Activated T-helper 2 cell treated with anti-CD3 and anti-CD28 coated beads, Interferon-gamma antibody, Interleukin-2, Interleukin-4, amounts not matched to agents 10 μg/mL and 5 μg/mL and 100 μg/mL, durations not matched to agents 14 hours and 24 hours and 36 hours (primary cell): ENCODE measurements at regions of chr7 and their contacts with region 1.

Region 1: DNA sequence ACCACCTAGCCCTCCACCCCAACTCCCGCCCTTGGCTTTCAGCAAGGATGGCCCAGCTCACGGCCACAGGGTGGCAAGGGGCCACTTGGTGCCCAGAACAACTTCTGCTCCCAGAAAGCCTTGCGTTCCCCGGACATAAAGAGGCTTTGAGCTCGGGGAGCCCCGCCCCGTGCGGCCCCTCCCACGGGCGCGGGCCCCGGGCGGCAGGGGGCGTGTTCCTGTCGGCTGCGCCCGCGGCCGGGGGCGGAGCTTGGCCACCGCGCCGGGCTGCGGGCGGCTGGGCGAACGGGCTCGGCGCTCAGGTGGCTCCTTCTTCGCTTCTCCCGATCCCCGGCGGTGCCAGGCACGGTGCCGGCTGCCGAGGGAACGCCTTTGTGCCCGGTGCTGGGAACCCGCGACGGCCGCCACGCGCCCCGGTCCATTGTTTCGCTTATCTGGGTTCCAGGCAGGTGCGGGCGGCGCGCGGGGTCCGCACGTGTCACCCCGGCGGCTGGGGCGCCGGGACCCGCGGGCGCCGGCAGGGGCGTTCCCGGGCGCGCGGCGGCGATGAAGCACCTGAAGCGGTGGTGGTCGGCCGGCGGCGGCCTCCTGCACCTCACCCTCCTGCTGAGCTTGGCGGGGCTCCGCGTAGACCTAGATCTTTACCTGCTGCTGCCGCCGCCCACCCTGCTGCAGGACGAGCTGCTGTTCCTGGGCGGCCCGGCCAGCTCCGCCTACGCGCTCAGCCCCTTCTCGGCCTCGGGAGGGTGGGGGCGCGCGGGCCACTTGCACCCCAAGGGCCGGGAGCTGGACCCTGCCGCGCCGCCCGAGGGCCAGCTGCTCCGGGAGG is at the start of gene NFE2L3:
- DNase-seq: peak; percentile 82
- H3K4me3 Mint-ChIP-seq: peak within 1 kb of the TSS; percentile 99
- H3K27ac Mint-ChIP-seq: peak within 1 kb of the TSS; percentile 97
- H3K4me1 Mint-ChIP-seq: peaks cover 56% of the 10 kb centered on the region
- H3K27me3 Mint-ChIP-seq: no peaks in the 10 kb centered on the region
- total RNA-seq, gene NFE2L3: 42.3 and 44.6 TPM in 2 replicates

Region 2: GRCh38 chr7:25862260-25863037 is 289.7 kb before region 1 on chr7:
- intact Hi-C with region 1: loop called (anchors 2 kb)
- DNase-seq: peak; percentile 99
- H3K4me3 Mint-ChIP-seq: peak overlapping the region; percentile 63
- H3K27ac Mint-ChIP-seq: peak overlapping the region; percentile 89
- H3K4me1 Mint-ChIP-seq: peaks cover 46% of the 10 kb centered on the region
- H3K27me3 Mint-ChIP-seq: peaks cover 52% of the 10 kb centered on the region

Region 3: GRCh38 chr7:26097852-26098668 is 54.1 kb before region 1 on chr7:
- intact Hi-C with region 1: loop called (anchors 2 kb)
- DNase-seq: no peak
- H3K4me3 Mint-ChIP-seq: peak overlapping the region; percentile 13
- H3K27ac Mint-ChIP-seq: peak overlapping the region; percentile 68
- H3K4me1 Mint-ChIP-seq: peaks cover 36% of the 10 kb centered on the region
- H3K27me3 Mint-ChIP-seq: no peaks in the 10 kb centered on the region

Region 4: GRCh38 chr7:26187380-26188205 is 35.4 kb after region 1 on chr7:
- intact Hi-C with region 1: loop called (anchors 1 kb)
- DNase-seq: no peak
- H3K4me3 Mint-ChIP-seq: no peak overlapping the region
- H3K27ac Mint-ChIP-seq: peak overlapping the region; percentile 83
- H3K4me1 Mint-ChIP-seq: peaks cover 73% of the 10 kb centered on the region
- H3K27me3 Mint-ChIP-seq: no peaks in the 10 kb centered on the region

Region 5: DNA sequence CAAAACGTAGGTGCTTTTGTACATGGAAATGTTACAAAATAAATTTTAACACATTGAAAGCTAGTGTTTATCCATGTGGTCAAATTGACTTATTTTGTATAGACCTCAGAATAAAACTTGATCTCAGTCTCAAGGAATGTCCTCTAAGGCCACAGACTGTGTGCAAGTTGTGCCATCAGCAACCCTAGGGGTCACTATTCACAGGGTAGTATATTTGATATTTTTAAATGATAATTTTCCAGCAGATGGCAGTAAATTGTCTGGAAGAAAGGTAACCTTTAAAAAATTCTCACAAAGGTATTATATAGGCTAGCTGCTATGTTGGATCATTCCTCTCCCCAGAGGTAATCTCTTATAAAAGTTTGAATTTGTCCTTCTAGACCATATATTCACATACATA is 126.6 kb after region 1 on chr7:
- intact Hi-C with region 1: loop called (anchors 2 kb)
- DNase-seq: no peak
- H3K4me3 Mint-ChIP-seq: no peak overlapping the region
- H3K27ac Mint-ChIP-seq: no peak overlapping the region
- H3K4me1 Mint-ChIP-seq: peaks cover 16% of the 10 kb centered on the region
- H3K27me3 Mint-ChIP-seq: no peaks in the 10 kb centered on the region